ENCODE measurements at regions of chr5 and their contacts with region 1.

Region 1: DNA sequence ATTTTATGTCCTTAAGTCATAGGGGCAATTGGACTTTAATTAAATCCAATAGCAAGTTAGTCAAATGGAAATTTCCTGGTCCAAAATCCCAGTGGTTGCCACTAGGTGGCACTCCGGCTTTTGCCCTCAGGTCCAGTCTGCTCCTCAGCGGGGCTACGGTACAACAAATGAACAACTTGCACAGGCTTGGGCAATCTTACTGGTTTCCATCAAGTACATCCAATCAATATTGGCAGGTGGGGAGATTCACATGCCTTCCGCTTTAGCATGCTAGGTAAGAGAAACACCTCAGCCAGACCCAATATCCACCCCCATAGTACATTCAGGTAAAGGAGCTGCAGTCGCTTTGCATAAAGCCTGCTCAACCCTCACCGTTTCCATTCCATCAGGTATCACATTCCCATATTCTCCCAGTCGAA is 6.3 kb upstream of the MXD3 start:
- DNase-seq: peak; percentile 38
- H3K4me3 ChIP-seq: no peak overlapping the region
- CTCF ChIP-seq: peak; percentile 78

Region 2: GRCh38 chr5:177303121-177303924 is 14.6 kb before region 1 on chr5 and contains the starts of genes PRELID1 and RAB24:
- CTCF ChIA-PET with region 1: interaction called, 48 read pairs
- POLR2A ChIA-PET with region 1: no interaction called
- DNase-seq: no peak
- H3K4me3 ChIP-seq: peak within 1 kb of the TSS; percentile 96
- CTCF ChIP-seq: peak; percentile 62

Region 3: GRCh38 chr5:177362610-177363507 is 44.9 kb after region 1 on chr5:
- CTCF ChIA-PET with region 1: interaction called, 20 read pairs
- POLR2A ChIA-PET with region 1: no interaction called
- DNase-seq: no peak
- H3K4me3 ChIP-seq: peak overlapping the region; percentile 49
- CTCF ChIP-seq: no peak